ENCODE measurements at regions of chr11 and their contacts with region 1.

Region 1: DNA sequence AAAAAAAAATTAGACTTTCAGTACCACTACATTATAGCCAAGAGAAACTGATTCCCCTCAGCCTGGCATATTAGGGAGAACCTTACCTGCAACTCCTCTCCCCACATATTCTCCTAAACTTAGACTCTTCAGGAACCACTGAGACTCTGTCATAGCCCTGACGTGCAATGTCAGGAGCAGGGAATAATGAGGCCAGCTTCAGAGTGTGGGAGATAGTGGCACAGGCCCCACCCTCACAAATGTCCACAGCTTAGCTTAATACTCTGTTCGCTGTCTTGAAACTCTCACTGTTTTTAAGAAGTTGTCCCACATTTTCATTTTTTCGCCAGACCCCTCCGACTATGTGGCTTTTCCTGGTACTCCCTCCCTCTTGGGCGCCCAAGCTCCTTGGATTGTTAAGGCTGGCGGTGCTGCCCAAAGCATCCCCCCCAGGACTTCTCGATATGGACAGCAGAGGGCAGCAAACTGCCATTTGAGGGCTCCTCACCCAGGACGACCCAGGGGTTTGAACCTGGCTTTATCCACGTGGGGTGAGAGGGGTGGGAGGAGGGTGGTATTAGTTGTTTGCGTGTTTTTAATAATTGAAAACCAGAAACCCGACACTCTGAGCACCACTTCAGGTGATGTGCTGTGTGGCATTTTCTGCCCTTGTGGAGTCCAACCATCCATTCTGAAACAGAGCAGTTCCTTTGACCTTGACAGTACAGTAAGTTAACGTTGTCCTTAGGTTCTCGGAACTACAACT is 45.2 kb upstream of the RASSF10 start:
- DNase-seq: peak; percentile 73
- H3K4me3 ChIP-seq: no peak overlapping the region
- H3K27ac ChIP-seq: no peak overlapping the region
- H3K4me1 ChIP-seq: peaks cover 3% of the 10 kb centered on the region; the same call in 1 of the 2 replicates
- H3K27me3 ChIP-seq: no peaks in the 10 kb centered on the region

Region 2: GRCh38 chr11:13152736-13153533 is 189.0 kb after region 1 on chr11:
- in situ Hi-C with region 1: loop called (anchors 5 kb)
- DNase-seq: peak; percentile 70
- H3K4me3 ChIP-seq: no peak overlapping the region
- H3K27ac ChIP-seq: no peak overlapping the region
- H3K4me1 ChIP-seq: no peaks in the 10 kb centered on the region
- H3K27me3 ChIP-seq: no peaks in the 10 kb centered on the region

Region 3: DNA sequence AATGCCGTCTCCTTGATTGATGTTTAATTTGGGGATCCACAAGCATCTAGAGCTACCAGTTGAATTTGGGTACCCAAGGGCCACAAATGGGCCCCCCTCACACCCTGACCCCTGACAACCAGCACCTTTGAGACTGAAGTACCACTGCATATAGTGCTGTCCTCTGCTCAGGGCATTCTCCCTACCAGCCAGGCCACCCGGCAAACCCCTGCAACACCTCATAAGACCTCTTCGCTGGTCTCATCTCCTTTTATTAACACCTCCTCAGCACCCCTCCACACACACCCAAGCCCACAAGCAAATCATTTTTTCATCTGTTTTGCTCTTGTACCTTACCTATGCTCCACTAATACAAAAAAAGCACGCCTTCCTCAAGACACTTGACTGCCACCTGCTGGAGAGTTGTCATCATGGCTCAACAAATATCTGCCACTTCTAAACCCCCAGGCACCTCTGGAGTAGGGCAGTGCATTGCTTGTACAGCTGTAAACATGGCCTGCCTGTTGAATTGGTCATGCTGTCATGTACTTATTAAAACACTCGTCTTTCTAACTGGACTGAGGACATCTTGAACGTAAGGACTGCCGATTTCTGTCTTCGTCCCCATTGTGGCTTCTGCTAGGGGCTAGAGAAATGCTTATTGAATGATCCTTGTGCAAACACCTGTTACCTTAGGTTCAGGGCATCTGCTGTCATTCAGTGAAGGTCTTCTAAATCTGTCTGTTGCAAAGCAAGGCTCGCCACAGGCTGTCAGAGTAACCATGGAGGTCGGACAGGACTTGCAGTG is 380.2 kb after region 1 on chr11:
- in situ Hi-C with region 1: loop called (anchors 10 kb)
- DNase-seq: peak; percentile 81
- H3K4me3 ChIP-seq: no peak overlapping the region
- H3K27ac ChIP-seq: no peak overlapping the region
- H3K4me1 ChIP-seq: peaks cover 10% of the 10 kb centered on the region
- H3K27me3 ChIP-seq: no peaks in the 10 kb centered on the region